B cell (primary cell): ENCODE measurements at regions of chr1 and their contacts with region 1.

Region 1: GRCh38 chr1:156751758-156752757 is 583 bp upstream of the HDGF start:
- DNase-seq: peak; percentile 95
- ATAC-seq: peak; percentile 88
- H3K4me3 ChIP-seq: peak overlapping the region; percentile 72 to 95 (median 86)
- H3K4me3 Mint-ChIP-seq: peak overlapping the region; percentile 93
- H3K27ac ChIP-seq: peak overlapping the region; percentile 58 to 82
- H3K27ac Mint-ChIP-seq: peak overlapping the region; percentile 94
- H3K4me1 ChIP-seq: peaks cover 46 to 62% of the 10 kb centered on the region in 2 donors
- H3K4me1 Mint-ChIP-seq: peaks cover 63% of the 10 kb centered on the region
- H3K27me3 ChIP-seq: no peaks in the 10 kb centered on the region
- H3K27me3 Mint-ChIP-seq: no peaks in the 10 kb centered on the region
- CTCF ChIP-seq: no peak

Region 2: DNA sequence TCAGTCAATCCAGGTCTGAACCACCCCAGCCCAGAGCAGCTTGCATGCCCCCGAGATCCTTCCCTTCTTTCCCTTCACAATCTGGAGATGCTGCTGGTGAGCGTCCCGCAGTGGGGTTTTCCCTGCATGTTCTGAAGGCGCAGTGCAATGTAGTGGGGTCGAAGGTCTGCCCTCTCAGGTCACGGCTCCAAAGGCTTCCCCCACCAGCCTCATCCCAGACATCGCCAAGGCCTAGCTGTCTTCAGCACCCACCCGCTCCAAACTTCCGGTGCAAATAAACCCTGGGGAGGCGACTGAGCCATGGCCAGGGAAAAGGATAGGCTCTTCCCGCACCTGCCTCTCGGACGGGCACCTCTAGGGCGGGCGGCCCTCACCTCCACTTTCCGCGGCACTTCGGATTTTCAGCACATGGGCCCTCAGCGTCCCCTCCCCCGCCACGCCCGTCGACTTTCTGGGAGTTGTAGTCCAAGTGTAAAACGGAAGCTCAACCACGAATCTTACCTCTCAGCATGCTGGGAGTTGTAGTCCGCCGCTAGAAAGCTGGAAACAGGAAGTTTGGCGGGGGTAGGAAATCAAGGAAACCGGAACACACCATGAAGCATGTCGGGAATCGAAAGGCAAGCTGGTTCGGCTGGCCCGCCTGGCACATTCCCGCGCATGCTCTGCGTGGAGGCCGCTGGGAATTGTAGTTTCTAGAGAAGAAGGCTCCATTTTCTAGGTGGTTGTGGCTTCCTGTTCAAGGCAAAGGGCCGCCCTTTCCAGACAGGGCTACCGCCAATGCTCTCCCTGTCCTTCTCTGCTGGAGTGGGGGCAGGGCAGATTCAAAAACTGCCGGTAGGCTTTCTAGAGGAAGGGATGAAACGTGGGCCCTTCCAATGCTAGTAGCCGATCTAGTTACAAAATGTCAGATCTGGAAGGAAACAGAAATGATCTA is 11.1 kb before region 1 on chr1 and contains the start of gene MRPL24:
- CTCF ChIA-PET with region 1: interaction called, 5 read pairs
- POLR2A ChIA-PET with region 1: interaction called, 21 read pairs
- intact Hi-C with region 1: loop called (anchors 1 kb)
- DNase-seq: peak; percentile 98
- ATAC-seq: peak; percentile 90
- H3K4me3 ChIP-seq: peak within 1 kb of the TSS; percentile 45 to 85 (median 71)
- H3K4me3 Mint-ChIP-seq: peak within 1 kb of the TSS; percentile 96
- H3K27ac ChIP-seq: peak within 1 kb of the TSS; percentile 77 to 95
- H3K27ac Mint-ChIP-seq: peak within 1 kb of the TSS; percentile 98
- H3K4me1 ChIP-seq: peaks cover 15 to 21% of the 10 kb centered on the region in 2 donors
- H3K4me1 Mint-ChIP-seq: peaks cover 37% of the 10 kb centered on the region
- H3K27me3 ChIP-seq: no peaks in the 10 kb centered on the region
- H3K27me3 Mint-ChIP-seq: no peaks in the 10 kb centered on the region
- CTCF ChIP-seq: no peak
- total RNA-seq, gene MRPL24: 34.6 and 41.1 TPM in 2 replicates